Posterior cingulate gyrus (tissue), 11 donors: ENCODE measurements at regions of chr18 and their contacts with region 1.

Region 1: GRCh38 chr18:21194871-21195771 is 46.9 kb upstream of the GREB1L start:
- DNase-seq: no peak

Region 2: DNA sequence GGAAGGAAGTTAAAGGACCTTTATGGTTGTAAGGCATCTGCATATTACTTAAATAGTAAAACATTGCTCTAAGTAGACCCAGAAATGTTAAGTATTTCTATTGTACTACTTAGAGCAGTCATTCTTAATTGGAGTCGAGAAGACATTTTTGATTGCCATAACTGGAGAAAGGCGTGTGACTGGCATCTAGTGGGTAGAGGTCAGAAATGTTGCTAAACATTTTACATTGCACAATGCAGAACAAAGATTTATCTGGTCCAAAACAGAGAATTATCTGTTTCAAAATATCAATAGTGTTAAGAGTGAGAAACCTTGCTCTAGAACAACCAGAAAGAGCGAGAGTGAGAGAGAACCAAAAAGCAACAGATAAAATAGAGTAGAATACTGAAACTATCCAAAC is 60.2 kb before region 1 on chr18:
- intact Hi-C with region 1: no loop called
- DNase-seq: peak in 1 of 10 donors; percentile 17

Region 3: GRCh38 chr18:21242780-21243500 is 47.8 kb after region 1 on chr18:
- intact Hi-C with region 1: loop called (anchors 2 kb)
- DNase-seq: peak in 9 of 10 donors; percentile 8 to 83 (median 24)

Region 4: DNA sequence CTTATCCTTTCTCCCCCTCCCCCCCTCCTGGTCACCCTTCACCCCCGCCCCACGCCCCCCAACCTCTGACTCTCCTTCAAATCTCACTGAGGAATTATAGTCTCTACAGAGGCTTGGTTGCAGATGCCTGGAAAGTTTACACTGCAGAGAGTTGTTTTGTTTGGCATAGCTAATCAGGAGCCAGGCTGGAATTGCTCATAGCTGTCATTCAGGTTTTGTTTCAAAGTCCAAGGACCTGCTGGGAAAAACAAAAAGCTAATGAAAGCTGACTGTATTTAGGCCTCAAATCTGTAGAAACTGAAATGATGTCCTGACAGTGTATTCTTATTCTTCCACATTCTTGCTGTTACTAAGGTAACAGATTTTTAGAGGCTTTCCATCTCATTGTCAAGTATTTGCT is 69.5 kb after region 1 on chr18:
- intact Hi-C with region 1: loop called (anchors 5 kb)
- DNase-seq: no peak

Region 5: GRCh38 chr18:21345840-21346239 is 150.7 kb after region 1 on chr18:
- intact Hi-C with region 1: no loop called
- DNase-seq: no peak

Region 6: DNA sequence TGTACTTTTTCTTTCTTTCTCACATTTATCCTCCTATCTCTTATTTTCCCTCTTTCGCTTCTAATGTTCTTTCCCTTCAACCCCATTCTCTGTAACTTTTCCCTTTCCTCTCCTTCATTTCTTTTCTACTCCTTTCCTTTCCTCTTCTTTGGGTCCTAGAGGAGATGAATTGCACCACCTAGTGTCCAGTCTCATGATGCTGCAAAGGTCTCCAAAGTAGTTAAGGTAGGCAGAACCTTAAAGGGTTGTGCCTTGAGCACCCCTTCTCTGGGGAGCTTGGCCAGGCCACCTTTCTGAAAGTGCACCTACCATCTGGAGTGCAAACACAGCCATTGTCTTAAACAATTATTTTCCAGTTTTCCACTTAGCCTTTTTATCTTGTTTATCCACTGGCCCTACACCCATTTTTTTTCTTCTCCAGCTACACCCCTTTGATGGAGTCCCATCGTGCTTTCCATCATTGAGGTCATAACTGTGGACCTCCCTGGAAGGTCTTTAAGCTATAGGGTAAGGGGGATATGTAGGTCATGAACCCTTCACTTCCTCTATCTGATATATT is 249.4 kb after region 1 on chr18:
- intact Hi-C with region 1: loop called (anchors 2 kb)
- DNase-seq: peak in 3 of 10 donors; percentile 19 to 49 (median 29)

Region 7: GRCh38 chr18:21571772-21572171 is 376.7 kb after region 1 on chr18:
- intact Hi-C with region 1: no loop called
- DNase-seq: no peak

Region 8: DNA sequence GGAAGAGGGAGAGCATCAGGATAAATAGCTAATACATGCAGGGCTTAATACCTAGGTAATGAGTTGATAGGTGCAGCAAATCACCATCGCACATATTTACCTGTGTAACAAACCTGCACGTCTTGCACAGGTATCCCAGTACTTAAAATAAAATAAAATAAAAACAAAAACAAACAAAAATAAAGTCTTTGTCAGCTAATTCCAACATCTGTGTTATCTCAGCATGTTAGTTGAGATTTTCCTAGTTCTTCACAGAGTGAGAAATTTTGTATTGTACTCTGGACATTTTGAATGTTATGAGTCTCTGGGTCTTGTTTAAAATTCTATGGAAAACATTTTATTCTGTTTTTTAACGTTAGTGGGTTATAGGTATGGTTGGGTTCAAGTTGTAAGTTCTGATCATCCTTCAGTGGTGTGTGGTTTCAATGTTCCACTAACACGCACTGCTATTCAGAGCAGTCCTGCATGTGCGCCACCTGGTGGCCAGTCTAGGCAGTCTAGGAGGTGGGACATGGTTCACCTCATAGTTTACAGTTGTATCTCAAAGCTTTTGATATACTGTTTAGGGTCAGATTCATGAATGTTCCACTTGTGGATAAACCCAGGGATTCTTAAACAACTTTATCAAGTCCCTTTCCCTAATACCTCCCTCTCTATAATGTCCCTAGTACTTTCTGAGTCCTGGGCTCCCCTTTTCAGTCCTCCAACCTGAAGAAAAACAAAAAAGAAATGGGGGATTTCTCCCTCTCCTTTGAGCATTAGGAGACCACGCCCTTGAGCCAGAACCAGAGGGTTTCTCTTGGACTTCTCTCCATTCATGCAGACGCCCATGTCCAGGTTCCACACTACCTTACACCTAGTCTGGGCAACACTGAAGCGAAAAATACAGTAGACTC is 760.9 kb after region 1 on chr18:
- intact Hi-C with region 1: loop called (anchors 2 kb)
- DNase-seq: peak; percentile 36 to 95 (median 78)

Region 9: GRCh38 chr18:22143347-22144340 is 948.5 kb after region 1 on chr18:
- intact Hi-C with region 1: no loop called
- DNase-seq: no peak